Activated CD4-positive, alpha-beta T cell treated with anti-CD3 and anti-CD28 coated beads, Interleukin-2, amount 10 ng/mL, durations not matched to agents 24 days and 14 days (primary cell): ENCODE measurements at regions of chr1 and their contacts with region 1.

Region 1: DNA sequence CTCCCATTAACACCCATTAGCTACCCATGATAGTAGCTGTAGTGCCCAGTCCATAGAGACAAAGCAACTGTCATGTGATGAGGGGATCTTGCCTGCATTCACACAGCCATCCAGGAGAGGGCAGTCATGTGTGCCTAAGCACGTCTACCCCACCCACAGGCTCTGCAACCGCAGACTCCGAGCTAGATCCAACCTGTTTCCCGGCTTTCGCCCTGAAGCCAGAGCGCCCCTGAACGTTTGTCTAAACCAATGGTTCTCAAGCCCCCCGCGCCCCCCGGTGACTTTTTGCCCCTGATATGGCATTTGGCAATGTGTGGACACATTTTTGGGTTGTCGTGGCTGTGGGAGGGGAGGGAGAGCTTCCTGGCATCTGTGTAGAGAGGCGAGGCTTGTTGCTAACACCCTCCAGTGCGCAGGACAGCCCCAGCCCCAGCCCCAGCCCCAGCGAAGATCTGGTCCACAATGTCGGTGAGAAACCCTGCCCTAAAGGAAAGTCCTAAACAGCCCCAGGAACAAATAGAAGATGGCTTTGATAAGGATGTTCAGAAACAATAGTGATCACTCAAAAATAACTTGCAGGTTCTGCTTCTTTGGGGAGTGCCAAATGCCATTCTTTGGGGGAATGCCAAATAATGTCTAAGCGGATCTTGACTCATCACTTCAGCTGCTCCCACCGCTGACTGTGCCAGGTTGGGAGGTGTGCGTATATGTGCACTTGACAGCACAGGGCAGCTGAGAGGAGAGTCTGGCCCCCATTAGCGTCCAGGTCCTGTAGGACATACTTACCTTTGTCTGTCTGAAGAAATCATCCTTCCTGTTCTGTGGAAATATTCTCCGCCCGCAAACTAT is 34.5 kb downstream of the SLC44A3 start:
- DNase-seq: peak; percentile 93
- H3K4me3 Mint-ChIP-seq: no peak overlapping the region
- H3K27ac Mint-ChIP-seq: no peak overlapping the region
- H3K4me1 Mint-ChIP-seq: no peaks in the 10 kb centered on the region
- H3K27me3 Mint-ChIP-seq: peaks cover 5% of the 10 kb centered on the region

Region 2: GRCh38 chr1:94903280-94904009 is 48.8 kb after region 1 on chr1:
- intact Hi-C with region 1: no loop called
- DNase-seq: no peak
- H3K4me3 Mint-ChIP-seq: no peak overlapping the region
- H3K27ac Mint-ChIP-seq: no peak overlapping the region
- H3K4me1 Mint-ChIP-seq: no peaks in the 10 kb centered on the region
- H3K27me3 Mint-ChIP-seq: no peaks in the 10 kb centered on the region

Region 3: DNA sequence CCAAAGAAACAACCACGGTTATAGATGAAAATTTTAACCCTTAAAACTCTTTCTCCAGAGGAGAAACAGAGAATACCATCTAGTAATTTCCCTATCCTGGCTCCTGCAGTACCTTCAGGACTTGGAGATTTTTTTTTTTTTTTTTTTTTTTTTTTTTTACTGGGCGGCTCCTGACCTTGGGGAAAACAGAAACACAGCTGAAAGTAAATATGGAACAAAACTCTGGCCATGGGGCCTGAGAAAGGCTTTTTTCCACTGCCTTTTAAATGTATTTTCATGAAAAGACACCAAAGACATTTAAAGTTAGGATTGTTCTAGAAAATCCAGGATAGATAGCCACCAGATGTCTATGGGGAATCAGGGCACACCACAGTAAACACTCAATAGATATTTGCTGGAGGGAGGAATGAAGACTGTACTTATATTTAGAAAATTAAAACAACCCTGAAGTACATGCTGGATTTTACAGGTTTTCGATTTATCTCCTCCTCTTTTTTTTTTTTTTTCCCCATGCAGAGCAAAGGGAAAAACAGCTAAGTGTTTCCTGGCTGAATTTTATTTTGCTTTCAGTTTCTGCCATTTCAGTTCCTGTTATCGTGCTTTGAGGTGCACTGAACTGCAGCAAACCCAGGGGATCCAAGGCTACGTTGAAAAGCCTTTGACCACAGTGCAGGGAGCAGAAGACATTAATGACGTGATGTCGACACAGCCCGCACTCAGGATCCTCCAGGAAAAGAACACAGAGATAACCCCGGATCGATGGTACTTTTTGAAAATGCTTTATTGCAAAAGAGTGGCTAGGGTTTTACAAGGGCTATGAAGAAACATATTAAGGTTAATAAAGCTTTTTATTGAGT is 108.0 kb after region 1 on chr1:
- intact Hi-C with region 1: loop called (anchors 2 kb)
- DNase-seq: peak; percentile 81
- H3K4me3 Mint-ChIP-seq: peak overlapping the region; percentile 91
- H3K27ac Mint-ChIP-seq: peak overlapping the region; percentile 97
- H3K4me1 Mint-ChIP-seq: peaks cover 5% of the 10 kb centered on the region
- H3K27me3 Mint-ChIP-seq: no peaks in the 10 kb centered on the region